ENCODE measurements at regions of chr11 and their contacts with region 1.

Region 1: DNA sequence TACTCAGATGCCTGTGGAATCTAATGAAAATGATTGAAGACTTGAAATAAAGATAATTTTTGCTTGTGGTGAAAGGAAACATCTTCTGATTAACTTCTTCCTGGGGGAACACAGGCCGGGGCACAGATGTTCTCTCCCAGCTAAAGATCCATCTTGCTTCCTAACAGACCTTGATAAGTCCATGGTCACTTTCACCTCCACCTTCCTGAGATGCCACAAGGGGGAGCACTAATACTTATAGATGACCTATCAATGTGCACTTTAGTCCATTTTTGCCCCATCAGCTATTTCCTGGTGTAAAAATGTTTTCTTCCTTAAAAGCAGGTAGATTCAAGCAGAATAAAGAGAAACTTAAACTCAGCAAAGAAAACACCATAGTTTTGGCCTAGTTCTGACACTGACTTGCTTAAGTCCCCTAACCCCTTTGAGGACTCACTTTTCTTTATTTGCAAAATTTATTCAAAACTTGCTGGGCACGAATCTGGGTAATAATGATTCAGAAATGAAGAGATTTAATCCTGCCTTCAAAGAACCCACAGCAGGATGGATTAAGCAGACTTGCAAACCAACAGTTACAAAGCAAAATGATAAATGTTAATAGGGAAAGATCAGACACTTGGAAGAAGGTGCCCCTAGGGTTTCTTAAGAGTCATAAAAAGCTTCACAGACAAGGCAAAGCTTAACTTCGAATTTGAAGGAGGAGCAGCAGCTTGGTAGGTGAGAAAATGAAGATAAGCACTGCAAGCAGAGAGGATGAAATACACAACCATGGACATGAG is 158.7 kb downstream of the RAB38 start:
- DNase-seq: peak; percentile 0 to 74 (median 29)
- ATAC-seq: peak in 3 of 4 experiments; percentile 31 to 46 (median 43)
- H3K4me3 ChIP-seq: no peak overlapping the region
- H3K4me3 Mint-ChIP-seq: no peak overlapping the region
- H3K27ac ChIP-seq: no peak overlapping the region
- H3K27ac Mint-ChIP-seq: no peak overlapping the region
- H3K4me1 ChIP-seq: no peaks in the 10 kb centered on the region
- H3K4me1 Mint-ChIP-seq: no peaks in the 10 kb centered on the region
- H3K27me3 ChIP-seq: no peaks in the 10 kb centered on the region
- H3K27me3 Mint-ChIP-seq: peaks cover 5 to 8% of the 10 kb centered on the region in 2 donors

Region 2: DNA sequence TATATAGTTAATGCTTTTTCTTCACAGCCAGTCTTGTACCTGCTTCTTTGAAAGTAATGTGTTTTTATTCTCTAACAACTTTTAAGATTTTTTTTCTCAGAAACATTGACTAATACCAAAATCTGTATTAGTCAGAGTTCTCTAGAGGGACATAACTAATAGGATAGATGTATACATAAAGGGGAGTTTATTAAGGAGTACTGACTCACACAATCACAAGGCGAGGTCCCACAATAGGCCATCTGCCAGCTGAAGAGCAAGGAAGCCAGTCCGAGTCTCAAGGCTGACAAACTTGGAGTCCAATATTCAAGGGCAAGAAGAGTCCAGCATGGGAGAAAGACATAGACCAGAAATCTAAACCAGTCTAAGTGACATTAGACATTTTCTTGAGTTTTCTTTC is 18.7 kb after region 1 on chr11:
- CTCF ChIA-PET with region 1: no interaction called
- POLR2A ChIA-PET with region 1: no interaction called
- DNase-seq: no peak
- ATAC-seq: no peak
- H3K4me3 ChIP-seq: no peak overlapping the region
- H3K4me3 Mint-ChIP-seq: no peak overlapping the region
- H3K27ac ChIP-seq: no peak overlapping the region
- H3K27ac Mint-ChIP-seq: no peak overlapping the region
- H3K4me1 ChIP-seq: no peaks in the 10 kb centered on the region
- H3K4me1 Mint-ChIP-seq: no peaks in the 10 kb centered on the region
- H3K27me3 ChIP-seq: peaks cover 0 to under 1% of the 10 kb centered on the region in 2 experiments
- H3K27me3 Mint-ChIP-seq: peaks cover 4 to 16% of the 10 kb centered on the region in 2 donors

Region 3: GRCh38 chr11:88543902-88544655 is 527.5 kb after region 1 on chr11:
- CTCF ChIA-PET with region 1: interaction called, 28 to 37 read pairs
- POLR2A ChIA-PET with region 1: no interaction called
- DNase-seq: peak; percentile 36 to 84 (median 69)
- ATAC-seq: peak; percentile 85 to 98 (median 96)
- H3K4me3 ChIP-seq: no peak overlapping the region
- H3K4me3 Mint-ChIP-seq: no peak overlapping the region
- H3K27ac ChIP-seq: no peak overlapping the region
- H3K27ac Mint-ChIP-seq: peak overlapping the region in 1 of 2 donors; percentile 49
- H3K4me1 ChIP-seq: no peaks in the 10 kb centered on the region
- H3K4me1 Mint-ChIP-seq: peaks cover 4 to 7% (median 5%) of the 10 kb centered on the region in 3 donors
- H3K27me3 ChIP-seq: no peaks in the 10 kb centered on the region
- H3K27me3 Mint-ChIP-seq: no peaks in the 10 kb centered on the region

Region 4: GRCh38 chr11:88552377-88553062 is 535.9 kb after region 1 on chr11:
- CTCF ChIA-PET with region 1: interaction called, 10 to 18 read pairs
- POLR2A ChIA-PET with region 1: interaction called in 1 of 2 experiments, 3 read pairs
- DNase-seq: peak in 34 of 35 experiments; percentile 9 to 62 (median 34)
- ATAC-seq: peak in 3 of 4 experiments; percentile 70 to 77 (median 71)
- H3K4me3 ChIP-seq: no peak overlapping the region
- H3K4me3 Mint-ChIP-seq: no peak overlapping the region
- H3K27ac ChIP-seq: no peak overlapping the region
- H3K27ac Mint-ChIP-seq: no peak overlapping the region
- H3K4me1 ChIP-seq: no peaks in the 10 kb centered on the region
- H3K4me1 Mint-ChIP-seq: no peaks in the 10 kb centered on the region
- H3K27me3 ChIP-seq: no peaks in the 10 kb centered on the region
- H3K27me3 Mint-ChIP-seq: no peaks in the 10 kb centered on the region